ENCODE measurements at regions of chr2 and their contacts with region 1.

Region 1: DNA sequence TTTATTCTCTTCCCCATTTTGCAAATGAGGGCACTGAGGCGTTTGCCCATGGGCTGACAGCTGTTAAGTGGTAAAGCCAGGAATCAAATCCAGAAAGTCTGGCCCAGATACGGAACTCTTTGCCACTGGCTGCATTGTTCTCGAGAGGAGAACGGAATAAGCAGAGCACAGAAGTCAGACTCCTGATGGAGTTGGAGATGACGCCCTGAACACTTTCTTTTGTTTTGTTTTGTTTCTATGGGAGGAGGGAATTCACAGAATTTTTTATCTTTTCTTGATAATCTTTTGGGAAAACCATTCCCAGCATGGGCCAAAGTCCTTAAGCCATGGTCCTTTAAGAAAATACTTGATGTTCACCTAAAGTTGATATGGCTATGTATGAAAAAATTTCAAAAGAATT is 322.2 kb downstream of the RDH14 start:
- DNase-seq: no peak
- ATAC-seq: no peak
- H3K4me3 ChIP-seq: no peak overlapping the region
- H3K27ac ChIP-seq: no peak overlapping the region
- H3K4me1 ChIP-seq: no peaks in the 10 kb centered on the region
- H3K27me3 ChIP-seq: no peaks in the 10 kb centered on the region
- CTCF ChIP-seq: no peak

Region 2: DNA sequence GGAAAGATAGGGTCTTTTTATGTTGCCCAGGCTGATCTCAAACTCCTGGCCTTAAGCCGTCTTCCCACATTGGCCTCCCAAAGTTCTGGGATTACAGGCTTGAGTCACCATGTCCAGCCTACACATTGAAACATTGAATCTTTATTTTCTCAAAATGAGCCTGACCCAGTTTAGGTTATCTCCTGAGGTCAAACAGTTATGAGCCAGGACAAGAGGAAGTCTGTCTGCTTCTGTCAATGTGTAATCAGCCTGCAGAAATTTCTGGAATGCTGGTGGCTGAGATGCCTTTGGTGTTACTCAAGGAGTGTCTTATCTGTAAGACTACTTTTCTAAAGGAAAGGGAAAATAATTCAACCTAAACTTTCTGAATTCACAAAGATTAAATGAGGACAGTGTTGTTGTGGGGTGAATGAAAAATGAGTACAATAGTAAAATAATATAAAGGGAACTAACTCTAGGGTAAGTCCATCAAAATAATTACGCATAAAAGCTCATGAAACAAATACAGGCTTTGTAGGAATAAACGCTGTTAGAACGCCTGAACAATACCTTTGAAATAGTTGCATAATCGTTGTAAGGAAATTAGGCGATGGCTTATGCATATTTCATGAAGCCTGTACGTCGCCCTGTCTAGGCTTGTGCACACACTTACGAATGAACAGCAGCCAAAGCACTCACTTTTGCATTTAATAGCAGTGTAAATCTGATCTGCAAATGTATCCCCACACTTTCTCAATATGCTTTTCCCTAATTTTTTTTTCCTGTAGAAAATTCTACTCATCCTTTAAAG is 61.4 kb after region 1 on chr2:
- intact Hi-C with region 1: loop called in 1 of 2 experiments (anchors 5 kb)
- DNase-seq: no peak
- ATAC-seq: no peak
- H3K4me3 ChIP-seq: no peak overlapping the region
- H3K27ac ChIP-seq: no peak overlapping the region
- H3K4me1 ChIP-seq: no peaks in the 10 kb centered on the region
- H3K27me3 ChIP-seq: no peaks in the 10 kb centered on the region
- CTCF ChIP-seq: no peak